ENCODE measurements at regions of chr7 and their contacts with region 1.

Region 1: DNA sequence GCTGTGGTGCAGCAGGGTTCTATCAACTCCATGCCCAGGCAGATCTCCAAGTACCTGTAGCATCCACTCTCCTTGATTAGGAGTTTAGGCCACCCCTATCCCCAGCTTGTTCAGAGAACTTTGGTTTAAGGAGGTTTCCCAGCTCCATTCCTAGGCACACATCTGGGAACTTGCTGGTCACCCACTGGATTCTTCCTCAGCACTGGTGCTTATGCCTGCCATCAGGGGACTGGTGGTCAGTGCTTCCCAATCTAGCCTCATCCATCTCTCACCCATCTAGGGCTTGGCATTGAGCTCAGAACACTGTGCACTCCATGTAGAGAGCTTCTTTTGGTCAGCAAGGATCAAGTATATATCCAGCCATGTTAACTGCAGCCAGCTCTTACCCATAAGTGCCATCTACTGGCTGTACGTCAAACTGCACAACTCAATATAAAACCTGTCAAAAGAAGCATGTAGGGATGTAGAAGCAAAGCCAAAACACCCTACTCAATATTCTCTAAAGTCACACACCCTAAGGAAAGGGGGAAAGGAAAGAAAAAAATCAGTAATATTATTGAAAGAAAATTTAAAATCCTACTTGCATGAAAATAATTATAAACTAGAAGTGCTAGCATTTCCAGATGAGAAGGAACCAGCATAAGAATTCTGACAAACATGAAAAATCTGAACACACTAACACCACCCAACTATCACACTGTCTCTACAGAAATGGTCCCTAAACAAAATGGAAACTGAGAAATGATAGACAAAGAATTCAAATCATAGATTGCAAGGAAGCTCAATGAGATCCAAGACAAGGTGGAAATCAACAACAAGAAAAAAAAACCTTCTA is 531.2 kb upstream of the STEAP1 start:
- DNase-seq: peak in 8 of 35 experiments; percentile 1 to 55 (median 7)
- ATAC-seq: peak; percentile 42 to 75 (median 71)
- H3K4me3 ChIP-seq: peak overlapping the region in 1 of 2 donors; percentile 15
- H3K4me3 Mint-ChIP-seq: peak overlapping the region in 1 of 3 donors; percentile 38
- H3K27ac ChIP-seq: no peak overlapping the region
- H3K27ac Mint-ChIP-seq: no peak overlapping the region
- H3K4me1 ChIP-seq: peaks cover 15 to 22% of the 10 kb centered on the region in 2 experiments
- H3K4me1 Mint-ChIP-seq: peaks cover 18 to 32% (median 27%) of the 10 kb centered on the region in 3 donors
- H3K27me3 ChIP-seq: no peaks in the 10 kb centered on the region
- H3K27me3 Mint-ChIP-seq: peaks cover 0 to 1% of the 10 kb centered on the region in 2 donors

Region 2: DNA sequence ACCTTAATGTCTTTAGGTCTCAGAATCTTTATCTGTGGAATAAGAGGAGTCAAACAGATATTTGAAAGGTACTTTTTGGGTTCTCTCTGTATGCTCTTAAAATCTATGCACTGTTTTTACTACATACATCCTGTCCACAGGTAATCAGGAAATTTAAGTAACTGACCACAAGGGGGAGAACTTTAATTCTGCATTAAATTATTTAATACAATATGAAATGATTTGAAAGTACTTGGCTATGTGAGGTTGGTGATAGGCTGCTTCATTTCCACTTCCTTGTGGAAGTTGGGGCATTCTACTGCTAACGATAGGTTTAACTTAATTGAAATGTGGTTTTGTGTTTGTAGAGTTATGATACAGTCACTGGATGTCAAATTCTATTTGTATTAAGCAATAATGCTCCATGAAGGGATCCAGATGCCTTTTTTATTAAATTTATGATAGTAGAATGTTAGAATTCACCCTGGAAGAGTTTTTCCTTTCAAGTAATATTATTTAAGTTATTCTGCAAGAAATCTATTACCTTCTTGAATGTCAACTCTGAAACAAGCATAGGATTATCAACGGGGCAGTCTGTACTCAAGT is 833.5 kb before region 1 on chr7:
- CTCF ChIA-PET with region 1: interaction called in 1 of 2 experiments, 16 read pairs
- POLR2A ChIA-PET with region 1: no interaction called
- DNase-seq: peak in 1 of 35 experiments; percentile 33
- ATAC-seq: no peak
- H3K4me3 ChIP-seq: no peak overlapping the region
- H3K4me3 Mint-ChIP-seq: no peak overlapping the region
- H3K27ac ChIP-seq: no peak overlapping the region
- H3K27ac Mint-ChIP-seq: no peak overlapping the region
- H3K4me1 ChIP-seq: no peaks in the 10 kb centered on the region
- H3K4me1 Mint-ChIP-seq: no peaks in the 10 kb centered on the region
- H3K27me3 ChIP-seq: no peaks in the 10 kb centered on the region
- H3K27me3 Mint-ChIP-seq: no peaks in the 10 kb centered on the region

Region 3: GRCh38 chr7:89401099-89401498 is 222.0 kb before region 1 on chr7:
- CTCF ChIA-PET with region 1: no interaction called
- POLR2A ChIA-PET with region 1: no interaction called
- DNase-seq: no peak
- ATAC-seq: no peak
- H3K4me3 ChIP-seq: no peak overlapping the region
- H3K4me3 Mint-ChIP-seq: no peak overlapping the region
- H3K27ac ChIP-seq: no peak overlapping the region
- H3K27ac Mint-ChIP-seq: no peak overlapping the region
- H3K4me1 ChIP-seq: no peaks in the 10 kb centered on the region
- H3K4me1 Mint-ChIP-seq: peaks cover 0 to 6% (median 0%) of the 10 kb centered on the region in 3 donors
- H3K27me3 ChIP-seq: no peaks in the 10 kb centered on the region
- H3K27me3 Mint-ChIP-seq: no peaks in the 10 kb centered on the region

Region 4: GRCh38 chr7:89584896-89585295 is 38.2 kb before region 1 on chr7:
- CTCF ChIA-PET with region 1: no interaction called
- POLR2A ChIA-PET with region 1: no interaction called
- DNase-seq: no peak
- ATAC-seq: no peak
- H3K4me3 ChIP-seq: no peak overlapping the region
- H3K4me3 Mint-ChIP-seq: no peak overlapping the region
- H3K27ac ChIP-seq: no peak overlapping the region
- H3K27ac Mint-ChIP-seq: no peak overlapping the region
- H3K4me1 ChIP-seq: no peaks in the 10 kb centered on the region
- H3K4me1 Mint-ChIP-seq: no peaks in the 10 kb centered on the region
- H3K27me3 ChIP-seq: no peaks in the 10 kb centered on the region
- H3K27me3 Mint-ChIP-seq: no peaks in the 10 kb centered on the region

Region 5: GRCh38 chr7:90512821-90513254 is 889.8 kb after region 1 on chr7:
- CTCF ChIA-PET with region 1: no interaction called
- POLR2A ChIA-PET with region 1: no interaction called
- DNase-seq: no peak
- ATAC-seq: no peak
- H3K4me3 ChIP-seq: no peak overlapping the region
- H3K4me3 Mint-ChIP-seq: no peak overlapping the region
- H3K27ac ChIP-seq: no peak overlapping the region
- H3K27ac Mint-ChIP-seq: no peak overlapping the region
- H3K4me1 ChIP-seq: no peaks in the 10 kb centered on the region
- H3K4me1 Mint-ChIP-seq: no peaks in the 10 kb centered on the region
- H3K27me3 ChIP-seq: no peaks in the 10 kb centered on the region
- H3K27me3 Mint-ChIP-seq: no peaks in the 10 kb centered on the region

Measured in T-cell (primary cell).